CD8-positive, alpha-beta T cell (primary cell): ENCODE measurements at regions of chr16 and their contacts with region 1.

Region 1: GRCh38 chr16:56317998-56318826 is 107.1 kb downstream of the AMFR start:
- DNase-seq: peak; percentile 50 to 87 (median 78)
- ATAC-seq: peak; percentile 99
- H3K4me3 ChIP-seq: peak overlapping the region; percentile 28 to 30
- H3K4me3 Mint-ChIP-seq: peak overlapping the region; percentile 60
- H3K27ac ChIP-seq: no peak overlapping the region
- H3K27ac Mint-ChIP-seq: no peak overlapping the region
- H3K4me1 ChIP-seq: peaks cover 6% of the 10 kb centered on the region
- H3K4me1 Mint-ChIP-seq: peaks cover 7% of the 10 kb centered on the region
- H3K27me3 ChIP-seq: peaks cover 0 to 3% of the 10 kb centered on the region in 2 experiments
- H3K27me3 Mint-ChIP-seq: no peaks in the 10 kb centered on the region
- CTCF ChIP-seq: peak; percentile 94

Region 2: DNA sequence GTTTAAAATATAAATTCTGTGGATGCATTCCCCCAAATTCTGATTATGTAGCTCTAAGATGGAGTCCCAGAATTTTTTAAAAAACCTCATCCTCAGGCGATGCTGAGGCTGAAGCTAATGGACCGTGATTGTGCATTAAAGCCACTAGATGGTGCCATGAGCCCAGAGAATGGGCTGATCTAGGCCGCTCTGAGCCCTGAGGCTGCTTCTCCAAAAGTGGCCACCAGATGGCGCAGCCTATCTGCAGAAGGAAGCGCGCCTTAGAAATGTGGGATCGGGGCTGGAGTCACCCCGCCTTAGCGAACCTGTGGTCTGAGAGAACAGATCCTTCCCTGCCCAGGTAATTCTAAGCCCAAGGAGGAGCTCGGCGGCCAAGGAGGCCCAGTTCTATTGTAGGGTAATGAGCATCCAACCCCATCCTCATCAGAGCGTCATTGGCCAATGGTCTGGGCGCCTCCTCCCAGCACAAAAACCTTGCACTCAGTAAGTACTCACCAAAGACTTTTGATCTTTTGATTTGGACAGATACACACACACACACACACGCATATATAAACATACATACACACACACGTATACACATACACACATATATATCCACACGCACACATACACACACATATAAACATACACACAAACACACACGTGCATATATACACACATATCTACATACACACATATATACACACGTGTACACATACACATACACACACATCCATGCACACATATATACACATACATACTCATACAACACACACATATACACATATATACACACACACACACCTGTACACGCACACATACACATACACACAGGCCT is 852.9 kb before region 1 on chr16:
- CTCF ChIA-PET with region 1: interaction called, 4 read pairs
- POLR2A ChIA-PET with region 1: no interaction called
- intact Hi-C with region 1: loop called in 1 of 2 experiments (anchors 1 kb)
- DNase-seq: peak; percentile 56 to 85 (median 82)
- ATAC-seq: peak; percentile 95
- H3K4me3 ChIP-seq: no peak overlapping the region
- H3K4me3 Mint-ChIP-seq: no peak overlapping the region
- H3K27ac ChIP-seq: no peak overlapping the region
- H3K27ac Mint-ChIP-seq: no peak overlapping the region
- H3K4me1 ChIP-seq: no peaks in the 10 kb centered on the region
- H3K4me1 Mint-ChIP-seq: no peaks in the 10 kb centered on the region
- H3K27me3 ChIP-seq: no peaks in the 10 kb centered on the region
- H3K27me3 Mint-ChIP-seq: no peaks in the 10 kb centered on the region
- CTCF ChIP-seq: peak; percentile 96

Region 3: GRCh38 chr16:55842369-55843104 is 475.7 kb before region 1 on chr16:
- CTCF ChIA-PET with region 1: no interaction called
- POLR2A ChIA-PET with region 1: no interaction called
- intact Hi-C with region 1: loop called in 1 of 2 experiments (anchors 5 kb)
- DNase-seq: peak in 5 of 9 experiments; percentile 5 to 61 (median 17)
- ATAC-seq: no peak
- H3K4me3 ChIP-seq: no peak overlapping the region
- H3K4me3 Mint-ChIP-seq: no peak overlapping the region
- H3K27ac ChIP-seq: no peak overlapping the region
- H3K27ac Mint-ChIP-seq: no peak overlapping the region
- H3K4me1 ChIP-seq: no peaks in the 10 kb centered on the region
- H3K4me1 Mint-ChIP-seq: no peaks in the 10 kb centered on the region
- H3K27me3 ChIP-seq: no peaks in the 10 kb centered on the region
- H3K27me3 Mint-ChIP-seq: peaks cover 14% of the 10 kb centered on the region
- CTCF ChIP-seq: peak; percentile 68

Region 4: GRCh38 chr16:56041686-56042085 is 276.5 kb before region 1 on chr16:
- CTCF ChIA-PET with region 1: interaction called, 9 read pairs
- POLR2A ChIA-PET with region 1: no interaction called
- intact Hi-C with region 1: loop called in 1 of 2 experiments (anchors 1 kb)
- DNase-seq: peak in 4 of 9 experiments; percentile 8 to 57 (median 49)
- ATAC-seq: peak; percentile 36
- H3K4me3 ChIP-seq: no peak overlapping the region
- H3K4me3 Mint-ChIP-seq: no peak overlapping the region
- H3K27ac ChIP-seq: no peak overlapping the region
- H3K27ac Mint-ChIP-seq: no peak overlapping the region
- H3K4me1 ChIP-seq: no peaks in the 10 kb centered on the region
- H3K4me1 Mint-ChIP-seq: no peaks in the 10 kb centered on the region
- H3K27me3 ChIP-seq: no peaks in the 10 kb centered on the region
- H3K27me3 Mint-ChIP-seq: peaks cover 27% of the 10 kb centered on the region
- CTCF ChIP-seq: no peak

Region 5: GRCh38 chr16:56300891-56301850 is 17.0 kb before region 1 on chr16:
- CTCF ChIA-PET with region 1: interaction called, 31 read pairs
- POLR2A ChIA-PET with region 1: no interaction called
- intact Hi-C with region 1: no loop called
- DNase-seq: no peak
- ATAC-seq: no peak
- H3K4me3 ChIP-seq: no peak overlapping the region
- H3K4me3 Mint-ChIP-seq: no peak overlapping the region
- H3K27ac ChIP-seq: no peak overlapping the region
- H3K27ac Mint-ChIP-seq: no peak overlapping the region
- H3K4me1 ChIP-seq: no peaks in the 10 kb centered on the region
- H3K4me1 Mint-ChIP-seq: no peaks in the 10 kb centered on the region
- H3K27me3 ChIP-seq: no peaks in the 10 kb centered on the region
- H3K27me3 Mint-ChIP-seq: peaks cover 8% of the 10 kb centered on the region
- CTCF ChIP-seq: no peak

Region 6: GRCh38 chr16:56356276-56357240 is 38.3 kb after region 1 on chr16:
- CTCF ChIA-PET with region 1: interaction called, 14 read pairs
- POLR2A ChIA-PET with region 1: no interaction called
- intact Hi-C with region 1: no loop called
- DNase-seq: peak; percentile 33 to 76 (median 54)
- ATAC-seq: peak; percentile 75
- H3K4me3 ChIP-seq: peak overlapping the region; percentile 55 to 60
- H3K4me3 Mint-ChIP-seq: peak overlapping the region; percentile 87
- H3K27ac ChIP-seq: peak overlapping the region; percentile 43 to 48
- H3K27ac Mint-ChIP-seq: peak overlapping the region; percentile 88
- H3K4me1 ChIP-seq: peaks cover 8% of the 10 kb centered on the region
- H3K4me1 Mint-ChIP-seq: peaks cover 21% of the 10 kb centered on the region
- H3K27me3 ChIP-seq: no peaks in the 10 kb centered on the region
- H3K27me3 Mint-ChIP-seq: no peaks in the 10 kb centered on the region
- CTCF ChIP-seq: peak; percentile 66

Region 7: DNA sequence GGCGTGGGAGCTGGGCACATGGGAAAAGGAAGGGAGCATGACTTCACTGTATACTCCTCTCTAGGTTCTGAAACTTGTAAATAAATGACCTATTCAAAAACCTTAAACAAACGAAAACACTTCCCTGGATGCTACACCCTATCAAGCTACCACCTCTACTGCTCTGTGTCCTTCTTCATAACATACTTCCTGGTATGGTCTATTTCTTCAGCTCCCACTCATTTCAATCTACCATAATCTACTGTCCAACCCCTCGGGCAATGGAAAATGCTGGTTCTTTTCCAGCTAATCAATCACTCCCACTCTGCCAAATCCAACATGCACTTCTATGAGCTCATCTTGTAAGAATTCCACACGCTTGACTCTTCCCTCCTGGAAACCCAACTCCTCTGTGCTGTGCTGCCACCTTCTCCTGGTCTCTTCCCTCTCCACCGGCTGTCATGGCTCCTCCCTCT is 64.7 kb after region 1 on chr16:
- CTCF ChIA-PET with region 1: no interaction called
- POLR2A ChIA-PET with region 1: no interaction called
- intact Hi-C with region 1: no loop called
- DNase-seq: no peak
- ATAC-seq: no peak
- H3K4me3 ChIP-seq: no peak overlapping the region
- H3K4me3 Mint-ChIP-seq: no peak overlapping the region
- H3K27ac ChIP-seq: no peak overlapping the region
- H3K27ac Mint-ChIP-seq: no peak overlapping the region
- H3K4me1 ChIP-seq: no peaks in the 10 kb centered on the region
- H3K4me1 Mint-ChIP-seq: peaks cover 2% of the 10 kb centered on the region
- H3K27me3 ChIP-seq: no peaks in the 10 kb centered on the region
- H3K27me3 Mint-ChIP-seq: no peaks in the 10 kb centered on the region
- CTCF ChIP-seq: no peak

Region 8: DNA sequence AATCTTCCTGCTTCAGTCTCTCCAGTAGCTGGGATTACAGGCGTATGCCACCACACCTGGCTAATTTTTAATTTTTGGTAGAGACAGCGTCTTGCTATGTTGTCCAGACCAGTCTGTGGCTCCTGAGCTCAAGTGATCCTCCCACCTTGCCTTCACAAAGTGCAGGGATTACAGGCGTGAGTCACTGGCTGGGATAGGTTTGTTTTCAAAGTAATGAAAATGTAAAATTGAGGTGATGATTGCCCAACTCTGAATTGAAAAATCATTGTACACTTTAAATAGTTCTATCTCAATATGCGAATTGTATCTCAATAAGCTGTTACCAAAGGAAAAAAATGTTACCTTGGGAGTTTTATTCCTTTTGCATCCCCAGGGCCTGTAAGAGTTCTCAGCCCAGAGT is 108.4 kb after region 1 on chr16:
- CTCF ChIA-PET with region 1: no interaction called
- POLR2A ChIA-PET with region 1: no interaction called
- intact Hi-C with region 1: no loop called
- DNase-seq: no peak
- ATAC-seq: no peak
- H3K4me3 ChIP-seq: no peak overlapping the region
- H3K4me3 Mint-ChIP-seq: peak overlapping the region; percentile 80
- H3K27ac ChIP-seq: peak overlapping the region in 1 of 2 experiments; percentile 17
- H3K27ac Mint-ChIP-seq: no peak overlapping the region
- H3K4me1 ChIP-seq: peaks cover 19% of the 10 kb centered on the region
- H3K4me1 Mint-ChIP-seq: peaks cover 34% of the 10 kb centered on the region
- H3K27me3 ChIP-seq: no peaks in the 10 kb centered on the region
- H3K27me3 Mint-ChIP-seq: no peaks in the 10 kb centered on the region
- CTCF ChIP-seq: no peak

Region 9: GRCh38 chr16:56789360-56789759 is 471.1 kb after region 1 on chr16:
- CTCF ChIA-PET with region 1: no interaction called
- POLR2A ChIA-PET with region 1: no interaction called
- intact Hi-C with region 1: no loop called
- DNase-seq: peak in 4 of 9 experiments; percentile 5 to 50 (median 44)
- ATAC-seq: peak; percentile 55
- H3K4me3 ChIP-seq: no peak overlapping the region
- H3K4me3 Mint-ChIP-seq: no peak overlapping the region
- H3K27ac ChIP-seq: no peak overlapping the region
- H3K27ac Mint-ChIP-seq: no peak overlapping the region
- H3K4me1 ChIP-seq: no peaks in the 10 kb centered on the region
- H3K4me1 Mint-ChIP-seq: peaks cover 3% of the 10 kb centered on the region
- H3K27me3 ChIP-seq: no peaks in the 10 kb centered on the region
- H3K27me3 Mint-ChIP-seq: no peaks in the 10 kb centered on the region
- CTCF ChIP-seq: peak; percentile 23